ENCODE measurements at regions of chr1 and their contacts with region 1.

Region 1: GRCh38 chr1:186974774-186975181 is 146.0 kb downstream of the PLA2G4A start:
- DNase-seq: no peak
- ATAC-seq: no peak
- H3K4me3 ChIP-seq: no peak overlapping the region
- H3K27ac ChIP-seq: no peak overlapping the region
- H3K4me1 ChIP-seq: no peaks in the 10 kb centered on the region
- H3K27me3 ChIP-seq: no peaks in the 10 kb centered on the region
- CTCF ChIP-seq: no peak
- POLR2A ChIP-seq: no peak

Region 2: GRCh38 chr1:186618401-186619170 is 356.2 kb before region 1 on chr1:
- intact Hi-C with region 1: loop called (anchors 10 kb)
- DNase-seq: peak in 3 of 4 donors; percentile 13 to 57 (median 15)
- ATAC-seq: peak; percentile 48
- H3K4me3 ChIP-seq: no peak overlapping the region
- H3K27ac ChIP-seq: peak overlapping the region in 1 of 4 donors; percentile 45
- H3K4me1 ChIP-seq: no peaks in the 10 kb centered on the region
- H3K27me3 ChIP-seq: no peaks in the 10 kb centered on the region
- CTCF ChIP-seq: no peak
- POLR2A ChIP-seq: no peak

Region 3: GRCh38 chr1:186655876-186656275 is 318.9 kb before region 1 on chr1:
- intact Hi-C with region 1: no loop called
- DNase-seq: peak in 1 of 4 donors; percentile 11
- ATAC-seq: no peak
- H3K4me3 ChIP-seq: no peak overlapping the region
- H3K27ac ChIP-seq: no peak overlapping the region
- H3K4me1 ChIP-seq: no peaks in the 10 kb centered on the region
- H3K27me3 ChIP-seq: no peaks in the 10 kb centered on the region
- CTCF ChIP-seq: no peak
- POLR2A ChIP-seq: no peak

Region 4: DNA sequence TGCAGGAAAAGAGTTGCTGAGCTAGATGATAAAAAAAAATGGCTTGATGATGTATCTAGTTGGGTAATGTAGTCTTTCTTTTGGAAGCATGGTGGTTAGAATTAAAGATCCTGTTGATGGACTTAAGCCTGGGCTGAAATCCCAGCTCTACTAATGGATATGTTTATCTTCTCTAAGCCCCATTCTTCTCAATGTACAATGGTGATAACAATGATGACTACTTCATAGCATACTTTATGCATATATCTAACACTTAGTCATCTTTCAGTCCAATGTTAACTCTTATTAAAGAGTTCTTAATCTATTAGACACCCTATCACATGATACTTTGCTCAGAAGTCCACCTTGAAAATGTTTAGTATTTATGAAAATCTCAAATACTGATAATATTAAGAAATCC is 43.5 kb after region 1 on chr1:
- intact Hi-C with region 1: no loop called
- DNase-seq: no peak
- ATAC-seq: no peak
- H3K4me3 ChIP-seq: no peak overlapping the region
- H3K27ac ChIP-seq: no peak overlapping the region
- H3K4me1 ChIP-seq: no peaks in the 10 kb centered on the region
- H3K27me3 ChIP-seq: no peaks in the 10 kb centered on the region
- CTCF ChIP-seq: no peak
- POLR2A ChIP-seq: no peak

Region 5: GRCh38 chr1:187157552-187157951 is 182.8 kb after region 1 on chr1:
- intact Hi-C with region 1: no loop called
- DNase-seq: no peak
- ATAC-seq: no peak
- H3K4me3 ChIP-seq: no peak overlapping the region
- H3K27ac ChIP-seq: no peak overlapping the region
- H3K4me1 ChIP-seq: no peaks in the 10 kb centered on the region
- H3K27me3 ChIP-seq: no peaks in the 10 kb centered on the region
- CTCF ChIP-seq: no peak
- POLR2A ChIP-seq: no peak